Adrenal gland (tissue), 19 donors: ENCODE measurements at regions of chr2 and their contacts with region 1.

Region 1: DNA sequence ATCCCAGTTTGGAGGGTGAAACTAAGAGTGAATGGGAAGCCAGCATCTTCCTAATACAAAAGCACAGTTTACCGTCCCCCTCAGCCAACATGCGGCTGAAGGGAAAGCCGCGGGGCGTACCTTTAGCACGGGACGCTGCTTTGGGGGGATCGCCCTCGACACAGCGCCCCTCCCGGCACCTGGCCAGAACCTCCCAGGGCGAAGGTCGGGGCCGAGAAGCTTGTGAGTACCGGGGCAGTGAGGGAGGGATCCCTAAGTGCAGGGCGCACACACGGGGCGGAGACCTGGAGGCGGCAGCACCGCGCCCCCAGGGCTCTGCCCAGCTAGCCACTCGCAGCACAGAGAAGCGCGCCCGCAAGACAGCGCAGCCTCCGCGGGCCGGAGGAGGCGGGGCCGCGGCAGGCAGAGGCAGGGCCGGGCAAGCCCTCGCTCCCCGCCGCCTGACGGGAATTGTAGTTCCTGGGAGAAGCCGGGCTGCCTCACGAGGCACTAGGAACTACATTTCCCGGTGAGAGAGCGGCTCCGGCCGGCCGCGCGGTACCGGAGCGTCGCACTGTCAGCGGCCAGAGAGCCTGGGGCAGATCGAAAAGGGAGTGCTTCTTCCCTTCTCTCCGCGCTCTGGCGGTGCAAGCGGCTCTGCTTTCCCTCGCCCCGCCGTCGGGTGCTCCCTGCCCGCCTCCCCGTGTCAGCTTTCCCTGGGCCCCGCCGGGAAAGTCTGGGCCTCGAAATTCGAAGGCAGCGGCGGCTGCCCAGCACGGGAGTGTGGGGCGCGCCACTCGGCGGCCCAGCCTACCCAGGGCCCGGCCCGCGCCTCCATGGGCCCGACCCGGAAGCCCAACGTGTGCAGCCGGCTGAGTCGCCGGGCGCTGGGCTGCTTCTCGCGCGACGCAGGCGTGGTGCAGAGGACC is at the starts of genes DCAF17 and METTL8:
- DNase-seq: peak; percentile 95 to 97 (median 96)
- H3K4me3 ChIP-seq: peak within 1 kb of the TSS; percentile 17 to 98 (median 50)
- H3K27ac ChIP-seq: peak within 1 kb of the TSS; percentile 87 to 99 (median 97)
- H3K4me1 ChIP-seq: peaks cover 7 to 14% of the 10 kb centered on the region in 2 donors
- H3K27me3 ChIP-seq: no peaks in the 10 kb centered on the region
- CTCF ChIP-seq: peak in 3 of 6 experiments; percentile 21 to 35 (median 31)
- POLR2A ChIP-seq: peak; percentile 78 to 82
- total RNA-seq, gene DCAF17: 9.6 to 21.9 (median 18.3) TPM
- total RNA-seq, gene METTL8: 13.8 to 37.5 (median 19.9) TPM

Region 2: DNA sequence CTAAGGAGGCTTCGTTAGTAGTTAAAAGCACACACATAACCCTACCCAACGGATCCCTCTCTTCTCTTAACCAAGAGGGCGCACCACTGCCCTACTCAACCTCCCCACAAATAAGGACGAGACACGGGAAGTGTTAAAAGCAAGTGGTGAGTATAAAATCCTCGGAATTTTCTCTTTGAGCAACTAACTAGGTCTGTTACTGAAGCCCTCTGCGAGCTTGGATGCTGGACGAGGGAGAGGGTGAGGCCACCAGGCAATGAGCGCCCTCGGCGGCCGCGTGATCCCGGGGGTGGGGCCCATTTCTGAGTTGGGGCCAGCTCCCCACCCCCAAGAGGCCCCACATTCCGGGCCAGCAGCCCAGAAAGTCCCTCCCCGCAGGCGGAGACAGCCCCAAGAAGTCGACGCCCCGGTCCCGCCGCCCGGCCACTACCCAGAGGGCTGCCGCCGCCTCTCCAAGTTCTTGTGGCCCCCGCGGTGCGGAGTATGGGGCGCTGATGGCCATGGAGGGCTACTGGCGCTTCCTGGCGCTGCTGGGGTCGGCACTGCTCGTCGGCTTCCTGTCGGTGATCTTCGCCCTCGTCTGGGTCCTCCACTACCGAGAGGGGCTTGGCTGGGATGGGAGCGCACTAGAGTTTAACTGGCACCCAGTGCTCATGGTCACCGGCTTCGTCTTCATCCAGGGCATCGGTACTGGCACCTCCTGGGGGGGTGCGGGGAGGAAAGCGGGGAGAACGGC is 88.2 kb after region 1 on chr2 and contains the start of gene CYBRD1:
- intact Hi-C with region 1: loop called (anchors 10 kb)
- DNase-seq: peak; percentile 86 to 92 (median 89)
- H3K4me3 ChIP-seq: peak within 1 kb of the TSS; percentile 70 to 98 (median 74)
- H3K27ac ChIP-seq: peak within 1 kb of the TSS; percentile 71 to 95 (median 87)
- H3K4me1 ChIP-seq: peaks cover 7 to 24% of the 10 kb centered on the region in 2 donors
- H3K27me3 ChIP-seq: no peaks in the 10 kb centered on the region
- CTCF ChIP-seq: no peak
- POLR2A ChIP-seq: peak; percentile 23 to 87
- total RNA-seq, gene CYBRD1: 17.6 to 346 (median 233) TPM

Region 3: DNA sequence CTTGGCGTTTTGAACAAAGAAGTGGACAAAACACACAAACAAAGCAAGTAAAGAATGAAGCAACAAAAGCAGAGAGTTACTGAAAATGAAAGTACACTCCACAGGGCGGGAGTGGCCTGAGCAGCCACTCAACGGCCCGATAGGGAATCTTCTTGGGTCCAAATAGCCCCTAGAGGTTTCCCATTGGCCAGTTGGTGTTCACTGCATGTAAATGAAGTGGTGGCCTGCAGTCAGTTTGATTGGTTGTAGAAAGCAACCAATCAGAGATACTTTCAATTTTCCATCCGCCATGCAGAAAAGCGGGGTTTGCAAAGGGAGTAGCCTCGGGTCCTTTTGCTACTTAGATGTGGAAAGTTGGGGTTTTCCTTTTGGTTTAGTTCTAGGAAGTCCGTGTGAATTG is 119.8 kb after region 1 on chr2:
- intact Hi-C with region 1: no loop called
- DNase-seq: peak; percentile 33 to 73 (median 50)
- H3K4me3 ChIP-seq: no peak overlapping the region
- H3K27ac ChIP-seq: no peak overlapping the region
- H3K4me1 ChIP-seq: no peaks in the 10 kb centered on the region
- H3K27me3 ChIP-seq: no peaks in the 10 kb centered on the region
- CTCF ChIP-seq: no peak
- POLR2A ChIP-seq: no peak